ENCODE measurements at regions of chr7 and their contacts with region 1.

Region 1: DNA sequence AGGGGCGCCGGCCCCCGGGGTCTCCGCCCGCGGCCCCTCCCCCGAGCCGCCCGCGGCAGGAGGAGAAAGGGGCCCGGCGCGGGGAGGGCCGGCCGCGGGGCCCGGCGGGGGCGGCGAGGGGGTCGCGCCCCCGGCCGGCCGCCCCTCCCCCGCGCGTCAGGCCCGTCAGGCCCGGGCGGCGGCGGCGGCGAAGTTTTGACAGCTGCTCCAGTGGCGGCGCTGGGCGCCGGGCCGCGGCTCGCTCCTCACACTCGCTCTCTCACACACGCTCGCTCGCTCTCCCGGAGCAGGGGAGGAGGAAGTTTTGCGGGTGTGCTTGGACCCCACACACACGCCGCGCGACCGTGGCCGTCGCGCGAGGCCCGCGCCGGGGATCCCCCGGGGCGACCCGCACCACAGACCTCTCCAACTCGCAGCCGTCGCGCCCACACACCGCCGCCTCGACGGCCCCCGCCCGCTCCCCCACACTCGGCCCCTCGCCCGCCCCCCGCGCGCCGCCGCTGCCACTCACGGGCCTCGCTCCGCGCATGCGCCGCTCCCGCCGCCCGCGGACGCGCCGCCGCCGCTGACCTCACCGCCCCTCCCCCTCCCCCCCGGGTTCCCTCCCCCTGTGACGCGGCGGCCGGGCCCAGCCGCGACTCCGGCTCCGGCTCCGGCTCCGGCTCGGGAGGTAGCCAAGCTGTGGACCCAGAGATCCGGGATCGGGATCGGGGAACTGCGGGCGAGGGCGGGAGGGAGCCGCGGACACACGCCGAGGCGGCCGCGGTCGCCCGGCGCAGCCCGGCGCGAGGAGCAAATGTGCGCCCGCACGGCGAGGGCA is 518 bp upstream of the KMT2C start:
- DNase-seq: peak; percentile 88
- H3K4me3 Mint-ChIP-seq: peak overlapping the region; percentile 74
- H3K27ac Mint-ChIP-seq: peak overlapping the region; percentile 78
- H3K4me1 Mint-ChIP-seq: peaks cover 22% of the 10 kb centered on the region
- H3K27me3 Mint-ChIP-seq: no peaks in the 10 kb centered on the region

Region 2: GRCh38 chr7:151631968-151632749 is 804.2 kb before region 1 on chr7:
- CTCF ChIA-PET with region 1: no interaction called
- intact Hi-C with region 1: loop called (anchors 10 kb)
- DNase-seq: peak; percentile 87
- H3K4me3 Mint-ChIP-seq: peak overlapping the region; percentile 95
- H3K27ac Mint-ChIP-seq: peak overlapping the region; percentile 99
- H3K4me1 Mint-ChIP-seq: peaks cover 23% of the 10 kb centered on the region
- H3K27me3 Mint-ChIP-seq: no peaks in the 10 kb centered on the region

Region 3: GRCh38 chr7:152025077-152025936 is 411.0 kb before region 1 on chr7 and contains the start of gene GALNT11:
- CTCF ChIA-PET with region 1: no interaction called
- intact Hi-C with region 1: loop called (anchors 10 kb)
- DNase-seq: peak; percentile 81
- H3K4me3 Mint-ChIP-seq: peak within 1 kb of the TSS; percentile 80
- H3K27ac Mint-ChIP-seq: peak within 1 kb of the TSS; percentile 77
- H3K4me1 Mint-ChIP-seq: peaks cover 30% of the 10 kb centered on the region
- H3K27me3 Mint-ChIP-seq: no peaks in the 10 kb centered on the region
- total RNA-seq, gene GALNT11: 15.6 to 19.8 TPM

Region 4: DNA sequence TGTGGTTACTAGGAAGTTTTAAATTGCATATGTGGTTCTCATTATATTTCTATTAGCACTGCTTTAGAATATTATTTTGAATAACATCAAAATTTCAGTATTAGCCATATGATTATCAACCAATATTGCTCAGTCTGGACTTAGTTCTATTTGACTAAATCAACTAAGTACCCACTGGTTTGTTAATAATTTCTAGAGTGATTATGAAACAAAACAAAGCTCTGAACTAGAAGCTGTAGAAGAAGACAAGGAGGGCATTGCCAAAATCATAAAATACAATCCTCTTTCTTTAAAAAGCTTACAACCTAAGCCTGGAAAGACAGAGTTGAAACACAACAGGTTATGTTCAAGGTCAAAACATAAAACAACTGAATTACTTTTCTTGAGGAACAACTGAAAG is 205.2 kb before region 1 on chr7:
- CTCF ChIA-PET with region 1: no interaction called
- intact Hi-C with region 1: no loop called
- DNase-seq: no peak
- H3K4me3 Mint-ChIP-seq: no peak overlapping the region
- H3K27ac Mint-ChIP-seq: no peak overlapping the region
- H3K4me1 Mint-ChIP-seq: no peaks in the 10 kb centered on the region
- H3K27me3 Mint-ChIP-seq: no peaks in the 10 kb centered on the region

Region 5: GRCh38 chr7:152336754-152337368 is 99.5 kb before region 1 on chr7:
- CTCF ChIA-PET with region 1: interaction called, 3 read pairs
- intact Hi-C with region 1: loop called (anchors 1 kb)
- DNase-seq: peak; percentile 11
- H3K4me3 Mint-ChIP-seq: no peak overlapping the region
- H3K27ac Mint-ChIP-seq: no peak overlapping the region
- H3K4me1 Mint-ChIP-seq: peaks cover 49% of the 10 kb centered on the region
- H3K27me3 Mint-ChIP-seq: no peaks in the 10 kb centered on the region

Region 6: DNA sequence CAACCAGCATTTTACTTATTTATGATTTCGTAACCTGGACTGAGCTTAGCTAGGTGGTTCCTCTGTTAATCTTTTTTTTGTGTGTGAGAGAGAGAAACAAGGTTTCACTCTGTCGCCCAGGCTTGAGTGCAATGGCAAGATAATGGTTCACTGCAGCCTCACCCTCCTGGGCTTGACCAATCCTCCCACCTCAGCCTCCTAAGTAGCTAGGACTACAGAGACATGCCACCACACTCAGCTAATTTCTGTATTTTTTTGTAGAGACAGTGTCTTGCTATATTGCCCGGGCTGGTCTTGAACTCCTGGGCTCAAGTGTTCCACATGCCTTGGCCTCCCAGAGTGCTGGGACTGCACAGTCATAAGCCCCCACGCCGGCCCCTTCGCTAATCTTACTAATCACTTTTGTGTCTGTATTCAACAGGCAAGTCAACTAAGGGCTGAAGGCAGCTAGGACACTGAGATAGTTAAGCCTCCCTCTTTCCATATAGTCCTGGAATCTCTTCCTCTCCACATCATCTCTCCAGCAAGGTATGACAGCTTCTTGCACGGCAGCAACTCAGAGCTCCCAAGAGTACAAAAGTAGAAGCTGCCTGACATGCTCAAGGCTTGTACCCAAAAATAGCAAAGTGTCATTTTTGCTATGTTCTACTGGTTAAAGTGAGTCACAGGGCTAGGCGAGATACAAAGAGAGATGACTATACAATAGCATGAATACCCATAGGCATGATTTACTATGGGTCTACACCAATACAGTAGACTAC is 11.8 kb before region 1 on chr7:
- CTCF ChIA-PET with region 1: no interaction called
- intact Hi-C with region 1: loop called (anchors 1 kb)
- DNase-seq: peak; percentile 45
- H3K4me3 Mint-ChIP-seq: no peak overlapping the region
- H3K27ac Mint-ChIP-seq: peak overlapping the region; percentile 72
- H3K4me1 Mint-ChIP-seq: peaks cover 71% of the 10 kb centered on the region
- H3K27me3 Mint-ChIP-seq: no peaks in the 10 kb centered on the region

Region 7: DNA sequence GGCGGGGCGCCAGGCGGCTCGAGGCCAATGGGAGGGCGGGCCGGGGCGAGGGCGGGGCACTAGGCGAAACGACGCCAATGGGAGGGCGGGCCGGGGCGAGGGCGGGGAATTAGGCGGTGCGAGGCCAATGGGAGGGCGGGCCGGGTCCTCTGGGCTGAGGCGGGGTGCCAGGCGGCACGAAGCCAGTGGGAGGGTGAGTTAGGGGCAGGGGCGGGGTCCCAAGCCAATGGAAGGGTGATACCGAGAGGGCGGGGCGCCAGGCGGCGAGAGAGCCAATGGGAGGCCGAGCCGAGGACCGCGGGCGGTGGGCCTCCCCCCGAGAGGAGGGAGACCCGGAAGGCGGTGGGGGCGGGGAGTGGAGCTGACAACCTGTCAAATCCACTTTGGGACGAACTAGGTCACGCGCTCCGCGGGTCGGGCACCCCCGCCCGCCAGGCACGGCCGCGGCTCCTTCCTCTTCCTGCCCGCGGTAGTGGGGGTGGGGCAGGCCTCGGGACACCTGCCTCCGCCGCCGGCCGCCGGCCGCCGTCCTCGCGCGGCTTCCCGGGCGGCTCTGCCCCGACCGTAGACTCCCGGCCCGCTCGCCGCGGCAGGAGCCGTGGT is 27.5 kb after region 1 on chr7:
- CTCF ChIA-PET with region 1: interaction called, 3 read pairs
- intact Hi-C with region 1: loop called (anchors 1 kb)
- DNase-seq: peak; percentile 100
- H3K4me3 Mint-ChIP-seq: peak overlapping the region; percentile 89
- H3K27ac Mint-ChIP-seq: no peak overlapping the region
- H3K4me1 Mint-ChIP-seq: peaks cover 8% of the 10 kb centered on the region
- H3K27me3 Mint-ChIP-seq: no peaks in the 10 kb centered on the region

Region 8: GRCh38 chr7:152512706-152513105 is 76.4 kb after region 1 on chr7:
- CTCF ChIA-PET with region 1: no interaction called
- intact Hi-C with region 1: loop called (anchors 2 kb)
- DNase-seq: peak; percentile 54
- H3K4me3 Mint-ChIP-seq: peak overlapping the region; percentile 38
- H3K27ac Mint-ChIP-seq: no peak overlapping the region
- H3K4me1 Mint-ChIP-seq: peaks cover 8% of the 10 kb centered on the region
- H3K27me3 Mint-ChIP-seq: no peaks in the 10 kb centered on the region

Region 9: DNA sequence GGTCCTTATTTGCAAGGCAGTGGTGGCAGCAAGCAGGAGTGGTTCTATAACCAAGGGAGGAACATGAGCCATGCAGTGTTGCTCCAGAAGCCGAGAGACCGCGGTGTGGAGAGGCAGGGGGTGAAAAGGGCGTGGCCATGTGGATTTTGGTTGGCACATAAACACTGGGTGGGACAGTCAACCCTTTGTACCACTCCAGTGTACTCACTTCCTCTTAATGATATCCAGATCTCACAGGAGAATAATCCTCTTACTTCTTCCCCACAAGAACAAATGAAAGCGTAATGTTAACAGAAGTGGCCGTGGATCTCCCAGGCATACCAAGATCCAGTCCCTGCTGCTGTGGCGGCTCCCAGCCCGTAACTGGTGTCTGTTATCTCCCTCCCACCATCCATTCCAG is 197.2 kb after region 1 on chr7:
- CTCF ChIA-PET with region 1: no interaction called
- intact Hi-C with region 1: no loop called
- DNase-seq: no peak
- H3K4me3 Mint-ChIP-seq: no peak overlapping the region
- H3K27ac Mint-ChIP-seq: no peak overlapping the region
- H3K4me1 Mint-ChIP-seq: no peaks in the 10 kb centered on the region
- H3K27me3 Mint-ChIP-seq: peaks cover 3% of the 10 kb centered on the region